Caco-2 (cell line): ENCODE measurements at regions of chr6 and their contacts with region 1.

Region 1: DNA sequence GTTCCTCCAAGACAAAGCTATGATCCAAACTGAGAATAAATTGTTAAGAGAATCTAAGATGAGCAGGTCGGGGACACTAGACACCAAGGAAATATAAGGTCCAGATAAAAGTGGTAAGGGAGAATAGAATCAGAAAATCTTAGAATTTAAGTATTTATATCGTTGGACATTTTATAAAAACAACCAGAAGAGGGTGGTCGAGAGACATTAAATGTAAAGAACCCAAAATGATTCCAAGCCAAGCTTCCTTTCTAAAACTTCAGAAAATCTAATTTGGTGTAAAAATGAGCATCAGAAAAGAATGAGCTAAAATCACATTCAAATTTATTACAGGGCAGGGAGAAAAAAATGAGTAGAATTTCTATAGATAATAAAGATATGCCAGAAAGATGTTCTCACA is 97.8 kb upstream of the OGFRL1 start:
- DNase-seq: no peak
- H3K4me3 ChIP-seq: no peak overlapping the region
- H3K4me3 Mint-ChIP-seq: no peak overlapping the region
- H3K27ac Mint-ChIP-seq: no peak overlapping the region
- H3K4me1 ChIP-seq: peaks cover 11% of the 10 kb centered on the region; the same call in 1 of the 2 replicates
- H3K4me1 Mint-ChIP-seq: peaks cover 11% of the 10 kb centered on the region
- H3K27me3 ChIP-seq: no peaks in the 10 kb centered on the region
- H3K27me3 Mint-ChIP-seq: no peaks in the 10 kb centered on the region
- CTCF ChIP-seq: peak in 1 of 2 experiments; percentile 29

Region 2: GRCh38 chr6:71288228-71289001 is 97.6 kb after region 1 on chr6 and contains the start of gene OGFRL1:
- CTCF ChIA-PET with region 1: no interaction called
- POLR2A ChIA-PET with region 1: interaction called, 3 read pairs
- intact Hi-C with region 1: loop called (anchors 2 kb)
- DNase-seq: peak; percentile 70 to 79
- H3K4me3 ChIP-seq: peak within 1 kb of the TSS; percentile 74
- H3K4me3 Mint-ChIP-seq: peak within 1 kb of the TSS; percentile 74
- H3K27ac Mint-ChIP-seq: no peak within 1 kb of the TSS
- H3K4me1 ChIP-seq: peaks cover 23% of the 10 kb centered on the region
- H3K4me1 Mint-ChIP-seq: peaks cover 20% of the 10 kb centered on the region
- H3K27me3 ChIP-seq: no peaks in the 10 kb centered on the region
- H3K27me3 Mint-ChIP-seq: no peaks in the 10 kb centered on the region
- CTCF ChIP-seq: peak in 1 of 2 experiments; percentile 9
- total RNA-seq, gene OGFRL1: 5.7 and 6.9 TPM in 2 replicates

Region 3: GRCh38 chr6:71349395-71349794 is 158.6 kb after region 1 on chr6:
- CTCF ChIA-PET with region 1: no interaction called
- POLR2A ChIA-PET with region 1: no interaction called
- intact Hi-C with region 1: loop called (anchors 1 kb)
- DNase-seq: no peak
- H3K4me3 ChIP-seq: no peak overlapping the region
- H3K4me3 Mint-ChIP-seq: no peak overlapping the region
- H3K27ac Mint-ChIP-seq: no peak overlapping the region
- H3K4me1 ChIP-seq: no peaks in the 10 kb centered on the region
- H3K4me1 Mint-ChIP-seq: no peaks in the 10 kb centered on the region
- H3K27me3 ChIP-seq: no peaks in the 10 kb centered on the region
- H3K27me3 Mint-ChIP-seq: peaks cover 15% of the 10 kb centered on the region
- CTCF ChIP-seq: peak; percentile 50 to 58

Region 4: GRCh38 chr6:71510057-71510713 is 319.4 kb after region 1 on chr6:
- CTCF ChIA-PET with region 1: no interaction called
- POLR2A ChIA-PET with region 1: no interaction called
- intact Hi-C with region 1: loop called (anchors 5 kb)
- DNase-seq: peak; percentile 54 to 69
- H3K4me3 ChIP-seq: no peak overlapping the region
- H3K4me3 Mint-ChIP-seq: no peak overlapping the region
- H3K27ac Mint-ChIP-seq: peak overlapping the region; percentile 50
- H3K4me1 ChIP-seq: 0 out of 2 replicates have a peak, but pooled peaks cover 3% of the 10 kb centered on the region
- H3K4me1 Mint-ChIP-seq: peaks cover 7% of the 10 kb centered on the region
- H3K27me3 ChIP-seq: no peaks in the 10 kb centered on the region
- H3K27me3 Mint-ChIP-seq: no peaks in the 10 kb centered on the region
- CTCF ChIP-seq: peak; percentile 59 to 68